ENCODE measurements at regions of chr15 and their contacts with region 1.

Region 1: DNA sequence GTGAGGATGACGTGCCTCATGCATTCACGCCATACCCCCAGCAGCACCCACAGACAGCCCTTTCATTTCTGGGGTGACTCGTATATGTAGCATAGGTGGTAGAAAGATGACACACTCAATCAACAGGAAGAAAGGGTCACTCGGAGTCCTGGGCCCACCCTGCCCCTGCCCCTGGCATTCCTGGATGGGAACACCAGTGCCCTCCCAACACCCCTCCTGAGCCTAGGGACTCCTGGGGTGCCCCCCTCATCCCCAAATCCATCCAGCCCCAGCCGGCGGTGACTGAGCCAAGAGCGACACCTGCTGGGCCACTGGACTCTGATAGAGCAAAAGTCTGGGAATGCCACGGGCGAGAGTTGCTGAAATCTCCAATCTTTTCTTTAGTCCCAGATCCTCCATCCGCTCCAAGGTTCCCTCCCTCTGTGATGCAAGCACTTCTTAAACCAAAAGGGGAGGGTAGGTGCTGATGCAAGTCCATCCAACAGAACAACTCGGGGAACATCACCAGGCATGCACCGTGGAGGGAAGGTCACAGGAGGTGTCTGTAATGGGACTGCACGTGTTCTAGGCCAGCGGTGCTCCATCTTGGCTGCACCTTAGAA is 31.1 kb downstream of the ACAN start:
- DNase-seq: peak; percentile 13 to 92
- H3K4me3 ChIP-seq: no peak overlapping the region
- H3K27ac ChIP-seq: no peak overlapping the region
- H3K4me1 ChIP-seq: no peaks in the 10 kb centered on the region
- H3K27me3 ChIP-seq: no peaks in the 10 kb centered on the region; a peak in 1 of 7 replicates
- CTCF ChIP-seq: peak; percentile 77 to 89 (median 79)
- EP300 ChIP-seq: no peak
- POLR2A ChIP-seq: no peak
- RAD21 ChIP-seq: peak; percentile 96

Region 2: DNA sequence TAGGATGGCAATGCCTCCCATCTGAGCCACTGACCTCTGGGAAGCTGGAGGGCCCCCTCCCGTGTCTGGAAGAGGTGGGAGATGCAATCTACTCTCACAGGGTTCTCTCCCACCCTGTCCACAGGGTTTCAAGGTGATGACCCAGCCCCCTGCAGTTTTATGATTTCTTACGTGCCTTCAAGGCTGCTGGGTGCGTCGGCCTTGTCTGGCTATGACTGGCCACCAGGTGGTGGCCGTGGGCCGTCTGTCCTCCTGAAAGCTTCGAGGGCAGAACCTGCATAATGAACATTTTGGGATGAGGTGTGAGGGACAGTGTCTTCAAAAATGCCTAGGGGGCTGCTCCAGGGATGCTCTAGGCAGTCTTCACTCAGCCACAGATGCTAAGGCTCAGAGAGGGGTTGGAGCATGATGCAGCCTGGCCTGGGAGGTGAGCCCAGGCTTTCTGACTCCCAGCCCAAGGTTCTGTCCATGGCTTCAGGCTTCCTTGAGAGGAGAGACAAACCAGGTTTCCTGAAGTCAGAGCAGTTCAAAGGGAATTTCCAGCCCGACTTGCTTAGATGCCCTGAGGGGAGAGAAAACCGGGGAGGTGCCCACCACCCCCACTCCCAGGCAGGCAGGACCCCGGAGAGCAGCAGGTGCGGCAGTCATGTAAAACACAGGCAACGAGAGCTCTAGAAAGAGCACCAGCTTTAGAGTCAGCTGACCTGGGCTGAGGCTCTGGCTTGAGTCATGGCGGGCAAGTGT is 176.8 kb before region 1 on chr15:
- CTCF ChIA-PET with region 1: interaction called, 114 read pairs
- POLR2A ChIA-PET with region 1: interaction called, 6 read pairs
- DNase-seq: no peak
- H3K4me3 ChIP-seq: no peak overlapping the region
- H3K27ac ChIP-seq: no peak overlapping the region
- H3K4me1 ChIP-seq: peaks cover 0 to 11% (median 6%) of the 10 kb centered on the region in 4 experiments; a peak in 5 of 7 replicates
- H3K27me3 ChIP-seq: no peaks in the 10 kb centered on the region; a peak in 1 of 7 replicates
- CTCF ChIP-seq: peak; percentile 79 to 88 (median 85)
- EP300 ChIP-seq: no peak
- POLR2A ChIP-seq: no peak
- RAD21 ChIP-seq: peak; percentile 90 to 96

Region 3: GRCh38 chr15:88695691-88696251 is 138.5 kb before region 1 on chr15:
- CTCF ChIA-PET with region 1: interaction called, 13 read pairs
- POLR2A ChIA-PET with region 1: no interaction called
- DNase-seq: no peak
- H3K4me3 ChIP-seq: no peak overlapping the region
- H3K27ac ChIP-seq: no peak overlapping the region
- H3K4me1 ChIP-seq: no peaks in the 10 kb centered on the region
- H3K27me3 ChIP-seq: no peaks in the 10 kb centered on the region; a peak in 1 of 7 replicates
- CTCF ChIP-seq: no peak
- EP300 ChIP-seq: no peak
- POLR2A ChIP-seq: no peak
- RAD21 ChIP-seq: peak; percentile 9 to 40; a peak in 2 of 4 replicates

Region 4: GRCh38 chr15:88727439-88727838 is 106.9 kb before region 1 on chr15:
- CTCF ChIA-PET with region 1: interaction called, 10 read pairs
- POLR2A ChIA-PET with region 1: no interaction called
- DNase-seq: no peak
- H3K4me3 ChIP-seq: no peak overlapping the region
- H3K27ac ChIP-seq: no peak overlapping the region
- H3K4me1 ChIP-seq: no peaks in the 10 kb centered on the region
- H3K27me3 ChIP-seq: no peaks in the 10 kb centered on the region
- CTCF ChIP-seq: no peak
- EP300 ChIP-seq: no peak
- POLR2A ChIP-seq: no peak
- RAD21 ChIP-seq: no peak

Region 5: GRCh38 chr15:88791637-88792036 is 42.7 kb before region 1 on chr15:
- CTCF ChIA-PET with region 1: interaction called, 11 read pairs
- POLR2A ChIA-PET with region 1: no interaction called
- DNase-seq: no peak
- H3K4me3 ChIP-seq: no peak overlapping the region
- H3K27ac ChIP-seq: no peak overlapping the region
- H3K4me1 ChIP-seq: peaks cover 6 to 10% (median 6%) of the 10 kb centered on the region in 4 experiments
- H3K27me3 ChIP-seq: peaks cover 0 to 9% (median 1%) of the 10 kb centered on the region in 4 experiments; a peak in 3 of 7 replicates
- CTCF ChIP-seq: no peak
- EP300 ChIP-seq: no peak
- POLR2A ChIP-seq: no peak
- RAD21 ChIP-seq: no peak

Region 6: DNA sequence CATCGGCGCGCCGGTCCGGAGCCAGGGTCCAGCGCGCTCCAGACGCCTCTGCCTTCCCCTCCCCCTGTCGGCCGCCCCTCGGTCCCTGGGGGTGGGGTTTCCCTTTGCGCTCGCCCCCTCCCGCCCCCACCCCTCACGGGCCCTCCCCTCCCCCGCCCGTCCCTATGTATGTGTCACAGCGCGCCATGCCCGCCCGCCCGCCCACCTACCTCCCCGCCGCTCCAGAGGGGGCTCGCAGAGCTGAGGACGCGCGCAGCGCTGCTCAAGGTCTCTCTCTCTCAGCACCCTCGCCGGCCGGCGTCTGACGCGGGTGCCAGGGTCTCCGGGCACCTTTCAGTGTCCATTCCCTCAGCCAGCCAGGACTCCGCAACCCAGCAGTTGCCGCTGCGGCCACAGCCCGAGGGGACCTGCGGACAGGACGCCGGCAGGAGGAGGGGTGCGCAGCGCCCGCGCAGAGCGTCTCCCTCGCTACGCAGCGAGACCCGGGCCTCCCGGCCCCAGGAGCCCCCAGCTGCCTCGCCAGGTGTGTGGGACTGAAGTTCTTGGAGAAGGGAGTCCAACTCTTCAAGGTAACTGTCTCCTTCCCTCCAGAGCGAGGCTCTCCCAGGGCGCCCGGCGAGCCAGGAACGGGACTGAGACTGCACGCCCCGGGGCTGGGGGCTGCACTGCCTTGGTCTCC is 30.9 kb before region 1 on chr15 and contains the start of gene ACAN:
- CTCF ChIA-PET with region 1: interaction called, 12 read pairs
- POLR2A ChIA-PET with region 1: interaction called, 4 read pairs
- DNase-seq: peak in 1 of 2 experiments; percentile 80
- H3K4me3 ChIP-seq: peak within 1 kb of the TSS; percentile 30 to 74 (median 73)
- H3K27ac ChIP-seq: no peak within 1 kb of the TSS
- H3K4me1 ChIP-seq: no peaks in the 10 kb centered on the region; a peak in 4 of 7 replicates
- H3K27me3 ChIP-seq: peaks cover 20 to 59% (median 46%) of the 10 kb centered on the region in 4 experiments
- CTCF ChIP-seq: no peak
- EP300 ChIP-seq: no peak
- POLR2A ChIP-seq: no peak
- RAD21 ChIP-seq: no peak
- total RNA-seq, gene ACAN: 0.67 and 0.71 TPM in 2 replicates

Region 7: GRCh38 chr15:88844749-88845386 is 10.6 kb after region 1 on chr15:
- CTCF ChIA-PET with region 1: interaction called, 10 read pairs
- POLR2A ChIA-PET with region 1: interaction called, 4 read pairs
- DNase-seq: no peak
- H3K4me3 ChIP-seq: no peak overlapping the region
- H3K27ac ChIP-seq: no peak overlapping the region
- H3K4me1 ChIP-seq: no peaks in the 10 kb centered on the region; a peak in 1 of 7 replicates
- H3K27me3 ChIP-seq: no peaks in the 10 kb centered on the region
- CTCF ChIP-seq: no peak
- EP300 ChIP-seq: no peak
- POLR2A ChIP-seq: no peak
- RAD21 ChIP-seq: no peak

Region 8: DNA sequence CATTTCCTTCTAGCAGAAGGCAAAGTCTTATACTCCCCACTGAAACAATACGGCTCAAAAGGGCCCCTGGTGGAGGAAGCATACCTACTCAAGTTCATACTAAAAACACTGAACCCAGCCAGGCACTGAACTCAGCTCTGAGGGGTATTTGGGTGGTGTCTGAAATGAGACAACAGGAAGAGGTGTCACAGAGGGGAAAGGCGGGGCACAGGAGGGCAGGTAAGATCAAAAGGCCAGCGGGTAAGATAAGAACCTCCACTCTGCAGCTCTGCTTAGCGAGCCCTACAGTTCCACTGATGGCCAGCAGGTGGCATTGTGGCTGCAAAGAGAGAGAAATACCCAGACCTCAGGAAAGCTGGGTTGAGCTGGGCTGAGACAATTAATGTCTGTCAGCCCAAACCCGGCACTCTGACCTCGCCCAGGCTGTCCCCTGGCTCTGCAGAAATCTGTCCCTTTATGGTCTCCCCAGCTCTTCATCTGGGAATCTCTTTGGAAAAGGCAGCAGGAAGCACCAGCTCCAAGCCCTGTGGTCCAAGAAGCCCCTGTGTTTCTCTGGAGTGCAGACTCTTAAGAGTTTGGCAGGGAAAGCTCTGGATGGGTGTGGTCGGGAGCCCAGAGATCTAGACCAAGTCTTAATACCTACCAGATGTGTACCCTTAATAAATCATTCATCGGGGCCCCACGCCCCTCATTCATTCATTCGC is 70.5 kb after region 1 on chr15:
- CTCF ChIA-PET with region 1: no interaction called
- POLR2A ChIA-PET with region 1: no interaction called
- DNase-seq: peak in 1 of 2 experiments; percentile 94
- H3K4me3 ChIP-seq: no peak overlapping the region
- H3K27ac ChIP-seq: no peak overlapping the region
- H3K4me1 ChIP-seq: peaks cover 2 to 32% (median 16%) of the 10 kb centered on the region in 4 experiments
- H3K27me3 ChIP-seq: no peaks in the 10 kb centered on the region
- CTCF ChIP-seq: peak; percentile 87 to 99 (median 91)
- EP300 ChIP-seq: no peak
- POLR2A ChIP-seq: no peak
- RAD21 ChIP-seq: peak; percentile 92 to 94